Activated naive CD4-positive, alpha-beta T cell treated with anti-CD3 and anti-CD28 coated beads for 36 hours (primary cell): ENCODE measurements at regions of chr22 and their contacts with region 1.

Region 1: GRCh38 chr22:41697126-41697775 is 2.1 kb upstream of the MEI1 start:
- DNase-seq: peak; percentile 97
- H3K4me3 Mint-ChIP-seq: peak overlapping the region; percentile 30
- H3K27ac Mint-ChIP-seq: peak overlapping the region; percentile 77
- H3K4me1 Mint-ChIP-seq: peaks cover 9% of the 10 kb centered on the region
- H3K27me3 Mint-ChIP-seq: no peaks in the 10 kb centered on the region

Region 2: DNA sequence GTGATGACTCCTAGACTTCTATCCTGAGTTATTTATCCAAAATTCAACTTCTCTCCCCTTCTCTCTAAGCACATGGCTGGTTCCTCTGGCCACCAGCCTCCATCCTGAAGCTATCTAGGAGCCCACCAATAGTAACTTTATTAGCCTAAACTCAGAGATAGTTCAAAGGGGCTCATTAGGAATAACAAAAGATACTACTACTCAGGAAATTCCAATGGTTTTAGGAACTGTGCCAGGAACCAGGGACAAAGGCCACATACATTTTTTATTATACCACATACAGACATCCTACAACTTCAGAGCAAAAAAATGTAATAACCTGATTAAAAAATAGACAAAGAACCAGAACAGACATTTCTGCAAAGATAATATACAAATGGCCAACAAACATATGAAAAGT is 906.0 kb before region 1 on chr22:
- CTCF ChIA-PET with region 1: no interaction called
- intact Hi-C with region 1: no loop called
- DNase-seq: no peak
- H3K4me3 Mint-ChIP-seq: no peak overlapping the region
- H3K27ac Mint-ChIP-seq: no peak overlapping the region
- H3K4me1 Mint-ChIP-seq: peaks cover 9% of the 10 kb centered on the region
- H3K27me3 Mint-ChIP-seq: no peaks in the 10 kb centered on the region

Region 3: GRCh38 chr22:41666661-41667258 is 30.5 kb before region 1 on chr22:
- CTCF ChIA-PET with region 1: interaction called, 16 read pairs
- intact Hi-C with region 1: no loop called
- DNase-seq: peak; percentile 94
- H3K4me3 Mint-ChIP-seq: peak overlapping the region; percentile 81
- H3K27ac Mint-ChIP-seq: peak overlapping the region; percentile 95
- H3K4me1 Mint-ChIP-seq: peaks cover 17% of the 10 kb centered on the region
- H3K27me3 Mint-ChIP-seq: no peaks in the 10 kb centered on the region

Region 4: GRCh38 chr22:41709341-41709740 is 12.1 kb after region 1 on chr22:
- CTCF ChIA-PET with region 1: interaction called, 19 read pairs
- intact Hi-C with region 1: no loop called
- DNase-seq: no peak
- H3K4me3 Mint-ChIP-seq: no peak overlapping the region
- H3K27ac Mint-ChIP-seq: no peak overlapping the region
- H3K4me1 Mint-ChIP-seq: no peaks in the 10 kb centered on the region
- H3K27me3 Mint-ChIP-seq: no peaks in the 10 kb centered on the region

Region 5: DNA sequence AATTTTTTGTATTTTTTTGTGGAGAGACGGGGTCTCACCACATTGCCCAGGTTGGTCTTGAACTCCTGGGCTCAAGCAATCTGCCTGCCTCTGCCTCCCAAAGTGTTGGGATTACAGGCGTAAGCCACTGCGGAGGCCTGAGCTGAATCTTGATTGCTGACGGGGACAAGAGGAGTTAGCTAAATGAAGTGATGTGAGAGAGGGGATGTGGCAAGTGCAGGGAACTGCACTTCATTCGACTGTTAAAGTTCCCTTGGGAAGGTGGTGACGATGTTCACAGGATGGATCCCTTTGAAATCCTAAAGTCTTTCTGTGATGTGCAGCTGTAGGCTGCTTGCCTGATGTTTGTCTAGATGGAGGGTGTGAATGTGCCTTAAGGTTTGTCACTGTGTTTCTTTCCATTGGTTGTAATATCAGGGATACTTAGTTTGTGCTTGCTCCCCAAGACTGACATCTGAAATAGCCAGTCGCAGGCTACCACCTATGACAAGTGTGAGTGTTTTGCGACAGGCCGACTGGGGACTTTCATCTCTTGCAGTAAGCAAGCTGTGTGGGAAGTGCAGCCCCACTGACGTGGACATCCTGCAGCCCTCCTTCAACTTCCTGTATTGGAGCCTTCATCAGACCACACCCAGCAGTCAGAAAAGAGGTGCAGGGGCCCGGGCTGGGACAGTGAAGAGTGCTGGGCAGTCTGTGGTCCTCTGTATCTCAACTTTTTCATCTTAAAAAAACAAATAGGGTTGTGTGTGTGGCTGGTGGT is 83.7 kb after region 1 on chr22:
- CTCF ChIA-PET with region 1: interaction called, 26 read pairs
- intact Hi-C with region 1: loop called (anchors 5 kb)
- DNase-seq: peak; percentile 98
- H3K4me3 Mint-ChIP-seq: peak overlapping the region; percentile 86
- H3K27ac Mint-ChIP-seq: peak overlapping the region; percentile 95
- H3K4me1 Mint-ChIP-seq: peaks cover 49% of the 10 kb centered on the region
- H3K27me3 Mint-ChIP-seq: no peaks in the 10 kb centered on the region

Region 6: GRCh38 chr22:41822317-41823060 is 125.2 kb after region 1 on chr22:
- CTCF ChIA-PET with region 1: interaction called, 10 read pairs
- intact Hi-C with region 1: loop called (anchors 5 kb)
- DNase-seq: peak; percentile 65
- H3K4me3 Mint-ChIP-seq: no peak overlapping the region
- H3K27ac Mint-ChIP-seq: peak overlapping the region; percentile 81
- H3K4me1 Mint-ChIP-seq: peaks cover 33% of the 10 kb centered on the region
- H3K27me3 Mint-ChIP-seq: no peaks in the 10 kb centered on the region

Region 7: GRCh38 chr22:41925655-41926460 is 228.6 kb after region 1 on chr22:
- CTCF ChIA-PET with region 1: interaction called, 12 read pairs
- intact Hi-C with region 1: no loop called
- DNase-seq: peak; percentile 80
- H3K4me3 Mint-ChIP-seq: peak overlapping the region; percentile 63
- H3K27ac Mint-ChIP-seq: no peak overlapping the region
- H3K4me1 Mint-ChIP-seq: peaks cover 28% of the 10 kb centered on the region
- H3K27me3 Mint-ChIP-seq: peaks cover 6% of the 10 kb centered on the region

Region 8: GRCh38 chr22:41957941-41958556 is 260.8 kb after region 1 on chr22:
- CTCF ChIA-PET with region 1: interaction called, 5 read pairs
- intact Hi-C with region 1: loop called (anchors 1 kb)
- DNase-seq: no peak
- H3K4me3 Mint-ChIP-seq: no peak overlapping the region
- H3K27ac Mint-ChIP-seq: no peak overlapping the region
- H3K4me1 Mint-ChIP-seq: peaks cover 4% of the 10 kb centered on the region
- H3K27me3 Mint-ChIP-seq: no peaks in the 10 kb centered on the region